BJ (cell line): ENCODE measurements at regions of chr2 and their contacts with region 1.

Region 1: GRCh38 chr2:199861132-199861774 is 10.3 kb upstream of the FTCDNL1 start:
- DNase-seq: no peak
- H3K4me3 ChIP-seq: no peak overlapping the region
- H3K27me3 ChIP-seq: no peaks in the 10 kb centered on the region
- CTCF ChIP-seq: peak; percentile 57

Region 2: DNA sequence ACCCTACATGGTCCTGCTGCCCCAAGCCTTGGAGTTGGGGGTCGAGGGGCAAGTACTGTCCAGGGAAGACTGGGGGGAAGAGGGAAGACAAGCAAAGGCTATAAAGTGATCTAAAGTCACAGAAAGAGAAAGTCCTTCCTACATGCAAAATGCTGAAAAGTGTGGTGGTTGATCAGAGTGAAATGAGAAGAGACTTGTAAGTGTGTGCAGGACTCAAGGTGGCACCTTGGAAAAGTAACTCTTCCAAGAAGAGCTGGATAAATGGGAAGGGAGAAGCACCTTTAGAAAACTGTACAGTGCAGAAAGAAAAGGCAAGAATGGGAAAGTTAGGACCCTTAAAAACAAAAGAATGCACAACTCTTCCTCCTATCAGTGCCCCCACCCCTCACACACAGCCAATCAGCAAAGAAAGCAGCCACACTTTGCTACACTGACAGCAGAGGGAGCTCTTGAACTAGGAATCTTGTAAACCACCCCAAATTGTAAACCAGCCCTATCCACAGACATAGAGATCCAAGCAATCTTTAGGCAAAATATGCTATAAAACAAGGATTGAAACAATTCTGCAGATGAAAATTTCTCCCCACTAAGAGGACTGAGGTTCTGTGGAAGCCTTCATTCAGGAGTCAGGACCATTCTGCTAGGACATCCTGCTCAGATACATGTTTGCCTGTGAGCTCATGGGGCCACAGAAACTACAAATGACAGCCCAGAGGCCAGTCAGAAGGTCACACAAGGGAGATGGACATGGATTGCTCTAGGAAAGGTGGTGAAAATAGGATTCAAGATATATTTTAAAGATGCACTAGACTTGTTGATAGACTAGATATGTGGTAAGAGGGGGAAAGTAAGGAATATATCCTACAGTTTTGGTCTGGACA is 156.7 kb before region 1 on chr2:
- CTCF ChIA-PET with region 1: interaction called, 22 read pairs
- POLR2A ChIA-PET with region 1: no interaction called
- DNase-seq: no peak
- H3K4me3 ChIP-seq: no peak overlapping the region
- H3K27me3 ChIP-seq: no peaks in the 10 kb centered on the region
- CTCF ChIP-seq: peak; percentile 70

Region 3: GRCh38 chr2:199895406-199895805 is 34.2 kb after region 1 on chr2:
- CTCF ChIA-PET with region 1: no interaction called
- POLR2A ChIA-PET with region 1: no interaction called
- DNase-seq: no peak
- H3K4me3 ChIP-seq: no peak overlapping the region
- H3K27me3 ChIP-seq: no peaks in the 10 kb centered on the region
- CTCF ChIP-seq: no peak